ENCODE measurements at regions of chr1 and their contacts with region 1.

Region 1: DNA sequence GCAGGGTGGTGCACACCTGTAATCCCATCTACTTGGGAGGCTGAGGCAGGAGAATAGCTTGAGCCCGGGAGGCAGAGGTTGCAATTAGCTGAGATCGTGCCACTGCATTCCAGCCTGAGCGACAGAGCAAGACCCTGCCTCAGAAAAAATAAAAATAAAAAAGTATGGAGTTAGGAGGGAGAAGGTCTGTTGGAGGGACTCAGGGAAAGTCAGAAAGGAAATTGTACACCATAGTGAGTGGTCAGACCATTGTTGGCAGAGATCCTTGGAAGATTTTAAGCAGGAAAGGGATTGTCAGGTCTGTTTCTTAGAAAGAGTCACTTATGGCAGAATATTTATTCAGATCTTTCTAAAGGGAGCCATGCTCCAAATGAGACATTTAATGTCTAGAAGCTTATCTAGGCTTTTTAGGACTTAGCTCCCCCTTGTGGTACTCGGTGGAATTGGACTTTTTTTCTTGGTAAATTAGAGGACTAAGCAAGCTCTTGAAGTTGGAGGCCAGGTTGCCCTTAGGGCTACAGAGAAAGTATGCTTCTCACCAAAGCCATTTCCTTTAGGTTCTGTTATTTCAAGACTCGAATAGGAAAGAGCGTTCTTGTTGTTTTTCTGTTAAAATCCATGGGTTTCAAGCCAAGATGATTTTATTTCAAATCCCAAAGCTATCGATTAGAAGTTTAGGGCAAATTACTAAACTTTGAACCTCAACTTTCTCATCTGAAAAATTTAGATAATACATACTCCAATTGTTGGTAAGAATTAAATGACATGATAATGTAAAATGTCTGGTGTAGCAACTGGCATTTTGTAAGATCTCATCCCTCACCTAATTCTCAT is 16.5 kb downstream of the MIA3 start:
- DNase-seq: peak; percentile 17 to 84 (median 76)
- ATAC-seq: peak; percentile 92 to 94
- H3K4me3 Mint-ChIP-seq: no peak overlapping the region
- H3K27ac Mint-ChIP-seq: peak overlapping the region in 8 of 10 donors; percentile 2 to 87 (median 68)
- H3K4me1 Mint-ChIP-seq: peaks cover 7 to 18% (median 14%) of the 10 kb centered on the region in 4 donors
- H3K27me3 Mint-ChIP-seq: no peaks in the 10 kb centered on the region

Region 2: GRCh38 chr1:222465211-222466041 is 169.0 kb before region 1 on chr1:
- POLR2A ChIA-PET with region 1: interaction called, 12 read pairs
- DNase-seq: peak; percentile 57 to 87 (median 77)
- ATAC-seq: peak; percentile 91 to 94
- H3K4me3 Mint-ChIP-seq: peak overlapping the region; percentile 82 to 92 (median 88)
- H3K27ac Mint-ChIP-seq: peak overlapping the region; percentile 82 to 97 (median 91)
- H3K4me1 Mint-ChIP-seq: peaks cover 6 to 14% (median 12%) of the 10 kb centered on the region in 4 donors
- H3K27me3 Mint-ChIP-seq: peaks cover 0 to 6% (median 3%) of the 10 kb centered on the region in 5 donors

Region 3: GRCh38 chr1:222529916-222530315 is 104.5 kb before region 1 on chr1:
- POLR2A ChIA-PET with region 1: no interaction called
- DNase-seq: no peak
- ATAC-seq: no peak
- H3K4me3 Mint-ChIP-seq: no peak overlapping the region
- H3K27ac Mint-ChIP-seq: no peak overlapping the region
- H3K4me1 Mint-ChIP-seq: no peaks in the 10 kb centered on the region
- H3K27me3 Mint-ChIP-seq: peaks cover 2 to 13% (median 9%) of the 10 kb centered on the region in 5 donors

Region 4: GRCh38 chr1:222606757-222607156 is 27.6 kb before region 1 on chr1:
- POLR2A ChIA-PET with region 1: no interaction called
- DNase-seq: no peak
- ATAC-seq: no peak
- H3K4me3 Mint-ChIP-seq: no peak overlapping the region
- H3K27ac Mint-ChIP-seq: no peak overlapping the region
- H3K4me1 Mint-ChIP-seq: no peaks in the 10 kb centered on the region
- H3K27me3 Mint-ChIP-seq: peaks cover 0 to 10% (median 0%) of the 10 kb centered on the region in 5 donors

Measured in naive thymus-derived CD8-positive, alpha-beta T cell (primary cell).